ENCODE measurements at regions of chr9 and their contacts with region 1.

Region 1: GRCh38 chr9:115042781-115043509 is 75.0 kb downstream of the TNC start:
- DNase-seq: peak; percentile 7
- H3K4me3 Mint-ChIP-seq: peak overlapping the region; percentile 1
- H3K27ac Mint-ChIP-seq: peak overlapping the region; percentile 78
- H3K4me1 Mint-ChIP-seq: peaks cover 47% of the 10 kb centered on the region
- H3K27me3 Mint-ChIP-seq: peaks cover 17% of the 10 kb centered on the region

Region 2: DNA sequence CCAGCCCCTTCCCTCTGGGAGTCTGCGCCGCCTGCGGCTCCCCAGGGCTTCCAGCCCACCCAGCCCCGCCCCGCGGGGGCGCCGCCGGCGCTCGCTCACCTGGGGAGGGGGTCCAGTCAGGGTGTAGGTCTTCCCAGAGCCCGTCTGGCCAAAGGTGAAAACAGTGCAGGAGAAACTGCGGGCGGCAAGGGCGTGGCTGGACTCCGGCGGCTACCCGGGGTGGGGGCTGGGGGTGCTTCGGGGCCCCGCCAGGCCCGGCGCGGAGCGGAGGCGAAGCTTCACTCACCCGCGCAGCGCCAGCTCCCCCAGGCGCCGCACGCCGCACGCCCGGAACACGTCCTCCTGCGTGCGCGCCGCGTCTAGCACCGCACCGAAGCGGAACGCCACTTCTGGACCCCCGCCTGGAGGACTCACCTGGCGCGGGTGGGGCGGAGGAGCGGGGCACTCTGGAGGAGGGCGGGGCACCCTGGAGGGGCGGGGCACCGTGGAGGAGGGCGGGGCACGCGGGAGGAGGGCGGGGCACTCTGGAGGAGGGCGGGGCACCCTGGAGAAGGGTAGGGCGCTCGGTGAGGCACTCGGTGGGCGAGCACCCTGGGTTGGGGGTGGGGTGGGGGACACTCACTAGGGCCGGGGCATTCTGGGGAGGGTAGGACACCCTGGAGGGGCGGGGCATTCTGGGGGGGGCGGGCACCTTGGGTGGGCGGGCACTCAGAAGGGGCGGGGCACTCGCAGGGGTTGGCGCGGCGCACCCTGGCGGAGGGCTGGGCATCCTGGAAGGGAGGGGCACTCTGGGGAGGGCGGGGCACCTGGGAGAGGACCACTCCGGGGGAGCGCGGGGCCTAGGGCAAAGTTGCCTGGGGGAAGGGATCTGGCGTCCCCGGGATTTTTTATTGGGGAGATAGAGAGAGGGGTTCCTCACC is 944.7 kb before region 1 on chr9:
- intact Hi-C with region 1: loop called (anchors 5 kb)
- DNase-seq: no peak
- H3K4me3 Mint-ChIP-seq: no peak overlapping the region
- H3K27ac Mint-ChIP-seq: no peak overlapping the region
- H3K4me1 Mint-ChIP-seq: peaks cover 5% of the 10 kb centered on the region
- H3K27me3 Mint-ChIP-seq: peaks cover 41% of the 10 kb centered on the region

Region 3: DNA sequence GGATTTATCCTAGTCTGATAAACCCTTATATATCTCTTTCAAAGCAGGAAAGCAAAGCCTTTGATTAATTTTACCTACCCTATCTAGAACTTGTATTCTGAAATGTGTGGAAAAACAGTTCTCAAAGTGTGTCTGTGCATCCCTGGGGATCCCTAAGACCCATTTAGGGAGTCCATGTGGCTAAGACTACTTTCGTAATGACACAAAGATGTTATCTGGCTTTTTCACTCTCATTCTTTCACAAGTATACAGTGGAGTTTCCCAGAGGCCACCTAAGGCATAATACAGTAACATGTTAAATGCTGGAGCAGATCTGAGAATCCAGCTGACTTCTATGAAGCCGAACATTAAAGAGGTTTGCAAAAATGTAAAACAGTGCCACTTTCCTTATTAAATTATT is 182.8 kb before region 1 on chr9:
- intact Hi-C with region 1: loop called (anchors 1 kb)
- DNase-seq: no peak
- H3K4me3 Mint-ChIP-seq: no peak overlapping the region
- H3K27ac Mint-ChIP-seq: no peak overlapping the region
- H3K4me1 Mint-ChIP-seq: peaks cover 22% of the 10 kb centered on the region
- H3K27me3 Mint-ChIP-seq: peaks cover 9% of the 10 kb centered on the region

Region 4: DNA sequence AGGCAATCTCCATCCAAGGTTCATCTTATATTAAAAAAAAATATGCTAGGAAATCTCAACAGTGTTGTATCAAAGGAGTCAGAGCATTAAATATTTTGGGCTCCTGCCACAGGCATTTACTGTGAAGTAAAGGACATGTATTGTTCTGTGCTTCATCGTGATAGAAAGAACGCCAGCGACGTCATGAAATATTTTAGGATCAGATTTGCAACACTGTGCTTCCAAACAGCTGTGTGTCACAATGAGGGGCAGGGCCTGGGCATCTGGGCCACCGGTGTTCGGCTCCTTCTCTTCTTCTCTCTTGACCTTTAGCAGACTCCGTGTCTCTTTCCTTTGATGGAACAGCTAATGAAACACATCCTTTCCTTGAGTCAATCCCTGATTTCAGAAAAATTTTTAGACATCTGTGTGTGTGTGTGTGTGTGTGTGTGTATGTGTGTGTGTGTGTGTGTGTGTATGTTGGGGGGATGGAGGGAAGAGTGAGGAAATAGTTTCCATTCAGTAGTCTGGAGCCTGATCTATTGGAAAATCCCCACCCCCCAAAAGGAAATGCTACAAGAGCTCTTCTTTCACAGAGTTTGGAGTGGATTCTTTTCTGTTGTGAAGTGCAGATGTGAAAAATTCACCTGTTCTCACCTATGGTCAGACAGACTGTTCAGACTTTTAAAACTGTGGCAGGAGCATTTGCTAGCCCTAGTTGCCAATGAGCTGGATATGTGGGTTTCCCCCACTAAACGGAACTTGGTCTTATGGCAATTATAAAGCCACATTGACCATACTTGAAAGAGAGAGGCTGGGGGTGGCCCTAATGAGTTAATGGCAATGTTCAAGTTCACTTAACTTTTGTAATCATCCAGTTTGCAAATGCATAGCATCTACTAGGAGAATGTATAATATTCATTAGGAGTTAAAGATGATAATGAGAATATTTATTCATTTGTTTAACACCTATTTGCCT is 93.2 kb after region 1 on chr9:
- intact Hi-C with region 1: loop called (anchors 5 kb)
- DNase-seq: no peak
- H3K4me3 Mint-ChIP-seq: no peak overlapping the region
- H3K27ac Mint-ChIP-seq: no peak overlapping the region
- H3K4me1 Mint-ChIP-seq: peaks cover 10% of the 10 kb centered on the region
- H3K27me3 Mint-ChIP-seq: peaks cover 15% of the 10 kb centered on the region

Measured in activated T-helper 1 cell treated with anti-CD3 and anti-CD28 coated beads, Interleukin-12 subunit alpha, Interleukin-12 subunit beta, Interleukin-2, Interleukin-4 antibody, amounts not matched to agents 30 ng/mL and 10 ng/mL and 1 ng/mL, durations not matched to agents 14 hours and 24 hours and 36 hours (primary cell).